Activated naive CD8-positive, alpha-beta T cell treated with anti-CD3 and anti-CD28 coated beads, Interleukin-2, amount 10 ng/mL, durations not matched to agents 7 days and 5 days (primary cell): ENCODE measurements at regions of chr22 and their contacts with region 1.

Region 1: DNA sequence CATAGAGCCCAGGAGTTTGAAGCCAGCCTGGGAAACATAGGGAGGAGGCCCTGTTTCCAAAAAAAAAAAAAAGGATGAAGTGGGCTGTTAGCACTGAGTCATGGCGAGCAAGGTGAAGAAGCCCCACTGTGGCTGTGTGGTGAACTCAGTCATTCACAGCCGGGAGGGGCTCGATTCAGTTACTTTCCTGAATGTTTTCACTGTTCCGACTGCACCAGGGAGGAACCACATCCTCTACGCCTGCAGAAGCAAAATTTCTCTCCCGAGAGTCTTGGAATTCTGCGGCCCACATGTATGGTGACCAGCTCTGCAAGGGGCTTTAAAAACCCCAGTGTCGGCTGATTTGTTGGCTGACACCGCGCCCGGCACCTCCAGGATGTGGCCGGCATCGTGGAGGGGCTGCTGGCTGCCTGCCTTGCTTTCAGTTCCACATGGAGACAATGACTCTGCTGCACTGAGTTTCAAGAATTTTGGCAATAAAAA is 27.8 kb upstream of the GRAMD4 start:
- DNase-seq: peak; percentile 82
- ATAC-seq: peak; percentile 72
- H3K4me3 Mint-ChIP-seq: peak overlapping the region; percentile 81
- H3K27ac Mint-ChIP-seq: peak overlapping the region; percentile 92
- H3K4me1 Mint-ChIP-seq: peaks cover 26% of the 10 kb centered on the region
- H3K27me3 Mint-ChIP-seq: no peaks in the 10 kb centered on the region

Region 2: GRCh38 chr22:46542011-46542985 is 50.1 kb before region 1 on chr22:
- POLR2A ChIA-PET with region 1: no interaction called
- DNase-seq: peak; percentile 78
- ATAC-seq: peak; percentile 99
- H3K4me3 Mint-ChIP-seq: no peak overlapping the region
- H3K27ac Mint-ChIP-seq: no peak overlapping the region
- H3K4me1 Mint-ChIP-seq: peaks cover 1% of the 10 kb centered on the region
- H3K27me3 Mint-ChIP-seq: peaks cover 38% of the 10 kb centered on the region

Region 3: GRCh38 chr22:46613606-46614021 is 21.2 kb after region 1 on chr22:
- POLR2A ChIA-PET with region 1: interaction called, 19 read pairs
- DNase-seq: no peak
- ATAC-seq: peak; percentile 12
- H3K4me3 Mint-ChIP-seq: peak overlapping the region; percentile 88
- H3K27ac Mint-ChIP-seq: peak overlapping the region; percentile 92
- H3K4me1 Mint-ChIP-seq: peaks cover 25% of the 10 kb centered on the region
- H3K27me3 Mint-ChIP-seq: no peaks in the 10 kb centered on the region